Activated naive CD8-positive, alpha-beta T cell treated with anti-CD3 and anti-CD28 coated beads, Interleukin-2, amount 10 ng/mL, durations not matched to agents 7 days and 5 days (primary cell): ENCODE measurements at regions of chr2 and their contacts with region 1.

Region 1: GRCh38 chr2:43226558-43226954 is at the start of gene ZFP36L2:
- DNase-seq: peak; percentile 99
- ATAC-seq: peak; percentile 62
- H3K4me3 Mint-ChIP-seq: peak within 1 kb of the TSS; percentile 98
- H3K27ac Mint-ChIP-seq: peak within 1 kb of the TSS; percentile 94
- H3K4me1 Mint-ChIP-seq: peaks cover 26% of the 10 kb centered on the region
- H3K27me3 Mint-ChIP-seq: no peaks in the 10 kb centered on the region
- total RNA-seq, gene ZFP36L2: 207 to 218 TPM

Region 2: DNA sequence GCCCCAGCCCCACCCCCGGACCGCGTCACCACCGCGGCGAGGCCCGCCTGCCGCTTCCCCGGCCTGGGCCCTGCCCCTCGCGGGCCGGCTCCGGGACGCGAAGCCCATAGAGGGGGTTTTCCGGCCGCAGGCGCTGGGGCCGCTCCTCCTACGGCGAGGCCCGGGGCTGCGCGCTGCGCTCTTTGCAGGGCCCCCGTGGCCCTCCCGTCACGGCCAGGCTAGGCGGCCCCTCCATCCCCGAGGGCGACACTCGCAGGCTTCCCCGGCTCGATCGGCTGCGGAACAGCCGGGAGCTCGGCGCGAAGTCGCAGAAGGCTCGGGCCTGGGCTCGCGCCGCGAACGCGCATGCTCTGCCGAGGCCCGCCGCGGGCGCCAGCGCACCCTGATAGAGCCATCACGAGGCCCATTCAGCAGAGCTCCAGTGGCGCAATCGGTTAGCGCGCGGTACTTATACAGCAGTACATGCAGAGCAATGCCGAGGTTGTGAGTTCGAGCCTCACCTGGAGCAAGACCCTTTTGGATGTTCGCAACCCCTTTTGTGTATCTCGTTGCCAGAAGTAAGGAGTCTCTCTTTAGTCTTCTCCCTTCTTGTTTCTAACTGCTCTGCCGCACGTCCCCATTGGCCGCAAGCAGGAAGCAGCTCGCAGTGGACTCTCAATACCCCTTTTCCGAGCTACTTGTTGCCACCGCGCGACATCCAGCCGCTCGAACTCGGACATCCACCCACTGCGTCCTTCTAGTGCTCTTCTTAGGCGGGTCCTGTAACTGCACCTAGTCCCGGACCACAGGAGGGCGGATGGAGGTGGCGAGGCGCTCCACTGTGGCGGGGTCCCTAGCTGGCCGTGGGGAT is 416.2 kb before region 1 on chr2:
- POLR2A ChIA-PET with region 1: interaction called, 10 read pairs
- DNase-seq: peak; percentile 99
- ATAC-seq: peak; percentile 83
- H3K4me3 Mint-ChIP-seq: peak overlapping the region; percentile 97
- H3K27ac Mint-ChIP-seq: peak overlapping the region; percentile 100
- H3K4me1 Mint-ChIP-seq: peaks cover 17% of the 10 kb centered on the region
- H3K27me3 Mint-ChIP-seq: peaks cover 12% of the 10 kb centered on the region

Region 3: DNA sequence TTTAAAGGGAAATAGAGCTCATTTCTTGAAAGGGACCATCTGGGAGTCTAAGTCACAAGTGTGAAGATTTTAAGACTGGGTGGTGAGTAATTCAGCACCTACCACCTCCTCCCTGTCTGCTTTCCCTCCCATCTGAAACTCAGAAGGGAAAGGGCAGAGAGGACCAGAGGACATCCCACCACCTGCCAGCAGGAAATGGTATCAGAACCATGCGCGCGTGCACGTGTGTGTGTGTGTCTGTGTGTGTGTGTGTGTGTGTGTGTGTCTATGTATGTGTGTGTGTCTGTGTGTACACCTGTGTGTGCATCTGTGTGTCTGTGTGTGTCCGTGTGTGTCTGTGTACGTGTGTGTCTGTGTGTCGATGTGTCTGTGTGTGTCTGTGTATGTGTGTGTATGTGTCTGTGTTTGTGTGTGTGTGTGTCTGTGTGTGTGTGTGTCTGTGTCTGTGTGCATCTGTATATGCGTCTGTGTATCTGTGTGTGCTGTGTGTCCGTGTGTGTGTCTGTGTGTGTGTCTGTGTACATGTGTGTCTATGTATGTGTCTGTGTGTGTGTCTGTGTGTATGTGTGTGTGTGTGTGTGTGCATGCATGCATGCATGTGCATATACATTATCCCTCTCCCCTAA is 77.0 kb before region 1 on chr2:
- POLR2A ChIA-PET with region 1: interaction called, 1,375 read pairs
- DNase-seq: peak; percentile 54
- ATAC-seq: peak; percentile 81
- H3K4me3 Mint-ChIP-seq: peak overlapping the region; percentile 61
- H3K27ac Mint-ChIP-seq: peak overlapping the region; percentile 89
- H3K4me1 Mint-ChIP-seq: peaks cover 46% of the 10 kb centered on the region
- H3K27me3 Mint-ChIP-seq: no peaks in the 10 kb centered on the region

Region 4: DNA sequence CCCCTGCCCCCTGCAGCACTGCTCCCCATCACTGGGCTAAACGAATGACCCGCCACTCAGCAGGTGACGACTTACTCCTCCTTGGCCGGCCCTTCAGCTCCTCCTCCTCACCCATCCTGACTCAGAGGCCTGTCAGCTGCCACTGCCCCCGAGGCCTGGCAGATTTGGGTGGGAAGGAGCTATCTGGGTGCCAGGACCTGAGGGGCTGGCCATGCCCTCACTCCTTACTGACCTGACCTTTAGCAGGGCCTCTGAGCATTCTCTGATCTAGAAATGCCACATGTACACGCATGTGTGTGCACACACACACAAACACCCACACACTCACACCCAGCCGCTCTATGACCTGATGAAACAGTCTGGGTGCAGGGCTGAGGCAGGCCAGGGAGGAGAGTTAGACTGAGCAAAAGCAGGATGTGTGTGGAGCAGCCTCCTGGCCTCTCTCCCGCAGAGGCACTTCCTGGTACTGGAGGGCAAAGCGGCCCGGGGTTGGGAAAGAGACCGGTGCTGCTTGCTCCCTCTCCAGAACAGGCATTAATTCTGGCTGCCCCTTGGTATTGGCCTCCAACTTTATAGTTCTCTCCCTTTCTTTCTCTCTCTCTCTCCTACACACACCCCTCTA is 68.2 kb before region 1 on chr2:
- POLR2A ChIA-PET with region 1: interaction called, 585 read pairs
- DNase-seq: peak; percentile 69
- ATAC-seq: peak; percentile 67
- H3K4me3 Mint-ChIP-seq: peak overlapping the region; percentile 71
- H3K27ac Mint-ChIP-seq: peak overlapping the region; percentile 95
- H3K4me1 Mint-ChIP-seq: peaks cover 44% of the 10 kb centered on the region
- H3K27me3 Mint-ChIP-seq: no peaks in the 10 kb centered on the region

Region 5: DNA sequence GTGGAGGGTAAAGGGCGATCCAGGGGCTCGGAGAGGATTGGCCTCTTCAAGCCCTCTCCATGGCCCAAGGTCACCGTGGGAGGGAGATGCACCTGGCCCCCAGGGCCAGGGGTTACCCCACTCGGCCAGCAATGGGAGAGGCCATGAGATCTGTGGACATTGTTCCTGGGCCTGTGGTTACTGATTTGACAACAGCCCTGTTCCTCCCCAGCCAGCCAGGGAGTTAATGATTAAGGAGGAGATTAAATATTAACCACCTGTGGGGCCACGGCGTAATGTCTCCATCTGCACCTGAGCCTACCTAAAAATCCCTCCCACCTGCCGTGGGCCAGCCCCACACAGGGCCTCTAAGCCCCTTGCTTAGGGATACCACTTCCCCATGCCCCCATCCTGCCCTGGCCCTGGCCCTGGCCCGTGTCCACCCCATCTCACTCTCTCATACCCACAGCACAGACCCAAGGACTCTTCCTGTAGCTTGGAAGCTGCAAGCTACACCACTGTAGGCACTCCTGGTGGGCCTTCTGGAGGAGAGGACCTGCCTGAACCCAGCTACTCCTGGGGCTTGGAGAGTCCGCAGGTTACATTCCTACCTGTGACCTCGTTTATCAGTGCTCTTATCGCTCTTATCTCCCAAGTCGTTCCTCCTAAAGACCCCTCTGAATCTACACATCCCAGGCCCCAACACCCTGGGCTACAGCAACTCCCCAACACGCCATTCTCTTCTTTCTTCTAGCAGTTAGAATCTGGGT is 32.3 kb before region 1 on chr2:
- POLR2A ChIA-PET with region 1: interaction called, 238 read pairs
- DNase-seq: peak; percentile 53
- ATAC-seq: peak; percentile 12
- H3K4me3 Mint-ChIP-seq: peak overlapping the region; percentile 81
- H3K27ac Mint-ChIP-seq: peak overlapping the region; percentile 94
- H3K4me1 Mint-ChIP-seq: peaks cover 57% of the 10 kb centered on the region
- H3K27me3 Mint-ChIP-seq: no peaks in the 10 kb centered on the region

Region 6: DNA sequence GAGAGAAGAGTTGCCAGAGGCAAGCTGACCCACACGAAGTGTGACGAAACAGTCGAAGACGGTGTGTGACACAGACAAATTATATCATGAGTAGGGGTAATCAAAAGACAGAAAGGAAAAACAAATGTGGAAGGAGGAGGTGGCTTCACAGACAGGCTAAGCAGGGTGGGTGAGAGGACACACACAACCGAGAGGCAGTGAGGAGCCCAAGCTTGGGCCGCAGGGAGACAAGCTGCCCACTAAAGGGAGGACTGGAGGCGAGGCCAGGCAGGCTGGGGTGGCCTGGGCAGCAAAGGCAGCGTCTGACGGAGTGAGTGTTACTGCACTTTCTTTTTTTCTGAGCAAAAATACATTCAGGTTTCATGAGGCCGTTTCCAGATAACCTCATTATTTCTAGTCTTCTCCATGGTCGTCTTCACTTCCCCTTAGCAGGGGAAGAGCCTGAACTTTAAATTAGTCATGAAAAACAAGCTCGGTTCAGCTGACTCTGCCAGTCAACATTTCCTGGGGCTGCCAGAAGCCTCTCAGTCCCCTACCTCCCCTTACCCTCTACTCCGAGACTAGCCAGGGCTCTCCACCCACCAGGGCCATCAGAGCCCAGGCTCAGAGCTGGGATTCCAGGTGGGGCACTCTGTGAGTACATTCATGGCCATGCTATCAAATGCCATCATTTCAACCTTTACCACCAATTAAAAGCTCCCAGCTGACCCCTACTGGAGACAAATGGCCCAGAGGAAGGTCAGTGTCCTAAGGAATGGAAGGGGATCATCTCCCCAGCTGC is 13.6 kb after region 1 on chr2:
- POLR2A ChIA-PET with region 1: no interaction called
- DNase-seq: no peak
- ATAC-seq: no peak
- H3K4me3 Mint-ChIP-seq: no peak overlapping the region
- H3K27ac Mint-ChIP-seq: no peak overlapping the region
- H3K4me1 Mint-ChIP-seq: peaks cover 3% of the 10 kb centered on the region
- H3K27me3 Mint-ChIP-seq: no peaks in the 10 kb centered on the region

Region 7: GRCh38 chr2:43276962-43277391 is 50.4 kb after region 1 on chr2:
- POLR2A ChIA-PET with region 1: no interaction called
- DNase-seq: no peak
- ATAC-seq: no peak
- H3K4me3 Mint-ChIP-seq: no peak overlapping the region
- H3K27ac Mint-ChIP-seq: peak overlapping the region; percentile 11
- H3K4me1 Mint-ChIP-seq: peaks cover 6% of the 10 kb centered on the region
- H3K27me3 Mint-ChIP-seq: no peaks in the 10 kb centered on the region

Region 8: GRCh38 chr2:43318791-43319190 is 92.2 kb after region 1 on chr2:
- POLR2A ChIA-PET with region 1: no interaction called
- DNase-seq: no peak
- ATAC-seq: no peak
- H3K4me3 Mint-ChIP-seq: no peak overlapping the region
- H3K27ac Mint-ChIP-seq: no peak overlapping the region
- H3K4me1 Mint-ChIP-seq: peaks cover 17% of the 10 kb centered on the region
- H3K27me3 Mint-ChIP-seq: no peaks in the 10 kb centered on the region